RWPE1 (cell line): ENCODE measurements at regions of chr22 and their contacts with region 1.

Region 1: DNA sequence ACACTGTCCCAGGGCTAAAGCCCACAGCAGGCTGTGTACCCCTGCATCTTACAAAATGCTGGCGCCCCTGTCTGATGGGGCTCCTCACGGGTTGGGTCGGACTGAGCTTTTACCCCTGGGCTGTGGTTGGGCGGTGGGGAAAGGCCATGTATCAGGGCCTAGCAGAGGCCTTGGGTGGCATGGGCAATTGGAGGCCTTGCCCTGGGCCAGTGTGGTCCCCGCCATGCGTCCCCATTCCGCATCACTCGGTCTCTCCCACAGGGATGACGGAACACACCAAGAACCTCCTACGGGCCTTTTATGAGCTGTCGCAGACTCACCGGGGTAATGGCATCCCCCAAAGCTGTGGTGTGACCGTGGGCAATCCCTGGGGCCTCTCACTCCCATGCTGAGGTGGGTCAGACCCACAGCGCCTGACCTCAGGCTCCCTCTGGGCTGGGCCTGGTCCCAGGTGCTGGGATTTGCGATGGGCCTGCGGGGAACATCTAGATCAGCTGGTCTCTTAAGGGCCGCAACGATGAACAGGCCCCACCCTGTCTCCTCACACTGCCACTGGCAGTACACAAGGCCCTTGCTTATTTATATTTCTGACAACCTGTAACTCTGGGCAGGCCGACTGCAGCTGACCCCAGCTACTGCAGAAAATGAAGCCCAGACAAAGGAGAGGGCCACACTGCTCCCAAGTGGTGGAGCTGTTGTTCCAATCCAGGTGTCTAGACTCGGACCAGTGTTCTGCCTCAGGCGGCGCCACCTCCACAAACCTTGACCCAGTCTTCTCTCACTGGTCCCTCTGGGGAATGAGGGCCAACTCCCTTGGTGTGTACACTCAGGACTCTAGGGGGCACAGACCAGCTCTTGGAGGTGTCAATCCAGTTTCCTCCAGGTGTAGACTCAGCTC is 12.3 kb downstream of the SLC16A8 start:
- DNase-seq: no peak
- H3K27ac ChIP-seq: peak overlapping the region; percentile 1; the same call in 1 of the 2 replicates
- CTCF ChIP-seq: no peak

Region 2: DNA sequence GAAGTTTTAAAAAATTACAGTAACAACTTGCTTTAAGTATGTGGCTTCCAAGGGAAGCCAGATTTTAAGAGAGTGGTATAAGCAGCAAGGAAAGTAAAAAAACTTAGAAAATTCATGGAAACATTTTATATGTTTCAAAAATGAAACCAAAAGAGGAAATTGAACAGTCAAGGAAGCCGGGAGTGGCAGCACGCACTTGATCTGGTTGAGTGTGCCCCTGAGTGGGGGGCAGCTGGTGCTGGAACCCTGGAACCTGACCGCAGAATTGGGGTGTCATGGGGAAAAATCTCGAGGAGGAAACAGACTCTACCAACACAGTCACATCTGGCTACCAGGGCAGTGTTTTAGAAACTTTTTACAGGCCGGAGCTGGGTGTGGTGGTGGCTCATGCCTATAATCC is 151.5 kb before region 1 on chr22:
- CTCF ChIA-PET with region 1: no interaction called
- POLR2A ChIA-PET with region 1: no interaction called
- DNase-seq: no peak
- H3K27ac ChIP-seq: peak overlapping the region; percentile 28
- CTCF ChIP-seq: no peak

Region 3: DNA sequence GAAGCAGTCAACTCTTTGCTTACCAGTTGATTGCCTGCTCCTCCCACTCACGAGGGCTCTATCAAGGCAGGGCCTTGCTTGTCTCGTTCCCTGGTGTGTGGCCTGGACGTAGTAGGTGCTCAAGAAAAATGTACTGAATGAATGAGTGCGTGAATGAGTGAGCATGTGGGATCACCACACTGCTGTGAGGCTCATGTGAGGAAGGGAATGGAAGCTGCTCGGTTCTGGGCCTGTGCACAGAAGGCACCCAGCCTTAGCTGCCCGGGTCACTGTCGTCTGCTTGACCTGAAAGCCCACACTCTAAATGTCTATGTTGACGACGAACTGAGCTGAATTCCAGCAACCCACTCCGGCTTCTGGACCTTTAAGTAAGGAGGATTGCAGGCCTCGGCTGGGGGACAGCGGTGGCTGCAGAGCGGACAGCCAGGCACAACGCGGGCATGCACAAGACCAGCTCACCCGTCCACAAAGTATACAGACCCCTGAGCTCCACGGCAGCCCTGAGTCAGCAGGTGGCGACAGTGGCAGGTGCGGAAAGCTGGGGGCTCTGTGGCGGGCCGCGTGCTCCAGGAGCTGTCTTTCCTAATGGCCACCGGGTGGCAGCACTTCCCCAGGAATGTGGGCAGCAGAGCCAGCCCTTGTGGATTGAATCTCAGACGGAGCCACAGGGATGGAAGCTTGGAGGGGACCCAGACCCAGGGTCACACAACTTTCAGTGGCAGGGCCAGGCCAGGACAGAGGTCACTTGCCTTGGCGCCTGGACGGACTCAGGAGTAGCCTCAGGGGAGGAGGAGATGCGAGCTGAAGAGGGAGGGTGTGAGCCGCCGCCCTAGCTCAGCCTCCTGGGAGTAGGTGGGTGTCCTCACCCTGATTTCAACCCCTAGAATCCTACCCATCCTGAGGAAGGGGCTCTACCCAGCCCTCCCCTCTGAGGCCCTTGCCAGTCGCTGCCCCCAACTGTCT is 19.5 kb before region 1 on chr22:
- CTCF ChIA-PET with region 1: no interaction called
- POLR2A ChIA-PET with region 1: no interaction called
- DNase-seq: peak; percentile 74
- H3K27ac ChIP-seq: no peak overlapping the region
- CTCF ChIP-seq: peak; percentile 88

Region 4: GRCh38 chr22:38684895-38685294 is 613.2 kb after region 1 on chr22:
- CTCF ChIA-PET with region 1: no interaction called
- POLR2A ChIA-PET with region 1: interaction called, 11 read pairs
- DNase-seq: no peak
- H3K27ac ChIP-seq: no peak overlapping the region; the same call in 1 of the 2 replicates
- CTCF ChIP-seq: no peak